ENCODE measurements at regions of chr6 and their contacts with region 1.

Region 1: DNA sequence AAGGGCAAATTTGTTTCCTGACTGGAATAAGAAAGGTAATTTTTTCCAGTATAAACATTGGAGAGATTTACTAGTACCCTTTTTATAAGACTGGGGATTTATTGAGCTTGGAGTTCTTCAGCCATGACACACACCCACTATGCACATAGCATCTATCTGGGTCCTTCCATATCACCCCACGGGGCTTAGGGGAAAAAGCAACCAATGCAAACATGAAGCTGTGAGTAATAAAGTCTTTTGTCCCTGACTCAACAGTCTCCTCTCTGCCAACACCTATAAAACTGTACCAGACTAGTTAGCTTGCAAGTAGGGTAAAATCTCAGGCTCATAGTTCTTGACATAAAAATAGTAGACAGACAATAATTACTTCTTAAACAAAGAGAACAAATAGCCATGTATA is 23.4 kb downstream of the COL21A1 start:
- DNase-seq: no peak
- H3K4me3 ChIP-seq: no peak overlapping the region
- H3K27ac ChIP-seq: peak overlapping the region; percentile 16 to 40
- H3K4me1 ChIP-seq: peaks cover 0 to 46% of the 10 kb centered on the region in 2 donors
- H3K27me3 ChIP-seq: no peaks in the 10 kb centered on the region
- CTCF ChIP-seq: no peak

Region 2: DNA sequence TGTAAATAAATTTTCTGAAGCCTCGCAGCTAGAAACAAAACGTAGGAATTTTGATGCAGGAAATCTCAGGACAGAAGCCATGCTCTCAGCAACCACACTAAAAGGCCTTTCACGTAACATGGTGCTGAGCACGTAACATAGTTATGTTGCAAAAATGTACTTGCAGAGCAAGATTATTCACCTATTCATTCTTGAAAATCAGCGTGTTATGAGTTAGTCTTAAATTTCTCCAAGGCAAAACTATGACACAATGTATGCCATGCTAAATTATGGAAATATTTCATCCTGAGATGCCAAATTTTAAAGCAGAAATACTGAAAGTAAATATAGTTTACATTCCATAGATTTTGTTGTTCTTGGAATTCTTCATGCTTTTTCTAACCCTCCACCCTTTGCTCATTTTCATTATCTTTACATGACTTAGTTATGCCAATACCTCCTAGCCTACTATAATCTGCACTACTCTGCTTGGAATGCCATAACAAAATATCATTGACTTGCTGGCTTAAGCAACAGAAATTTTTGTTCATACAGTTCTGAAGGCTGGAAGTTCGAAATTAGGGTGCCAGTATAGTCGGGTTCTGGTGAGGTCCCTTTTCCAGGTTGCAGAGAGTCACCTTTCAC is 168.8 kb before region 1 on chr6:
- intact Hi-C with region 1: no loop called
- DNase-seq: no peak
- H3K4me3 ChIP-seq: no peak overlapping the region
- H3K27ac ChIP-seq: no peak overlapping the region
- H3K4me1 ChIP-seq: no peaks in the 10 kb centered on the region
- H3K27me3 ChIP-seq: no peaks in the 10 kb centered on the region
- CTCF ChIP-seq: no peak

Region 3: GRCh38 chr6:56131435-56131834 is 92.6 kb before region 1 on chr6:
- intact Hi-C with region 1: loop called (anchors 10 kb)
- DNase-seq: no peak
- H3K4me3 ChIP-seq: no peak overlapping the region
- H3K27ac ChIP-seq: no peak overlapping the region
- H3K4me1 ChIP-seq: peaks cover 0 to 2% of the 10 kb centered on the region in 2 donors
- H3K27me3 ChIP-seq: no peaks in the 10 kb centered on the region
- CTCF ChIP-seq: no peak

Region 4: DNA sequence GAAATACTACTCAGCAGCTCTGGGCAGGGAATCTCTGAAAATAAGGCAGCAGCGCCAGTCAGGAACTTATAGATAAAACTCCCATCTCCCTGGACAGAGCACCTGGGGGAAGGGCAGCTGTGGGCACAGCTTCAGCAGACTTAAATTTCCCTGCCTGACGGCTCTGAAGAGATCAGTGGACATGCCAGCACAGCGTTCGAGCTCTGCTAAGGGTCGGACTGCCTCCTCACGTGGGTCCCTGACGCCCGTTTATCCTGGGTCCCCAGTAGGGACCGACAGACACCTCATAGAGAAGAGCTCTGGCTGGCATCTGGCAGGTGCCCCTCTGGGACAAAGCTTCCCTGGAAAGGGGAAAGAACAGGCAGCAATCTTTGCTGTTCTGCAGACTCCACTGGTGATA is 35.6 kb before region 1 on chr6:
- intact Hi-C with region 1: loop called (anchors 5 kb)
- DNase-seq: no peak
- H3K4me3 ChIP-seq: no peak overlapping the region
- H3K27ac ChIP-seq: peak overlapping the region; percentile 31 to 55
- H3K4me1 ChIP-seq: no peaks in the 10 kb centered on the region
- H3K27me3 ChIP-seq: no peaks in the 10 kb centered on the region
- CTCF ChIP-seq: no peak

Region 5: GRCh38 chr6:56424542-56425083 is 200.6 kb after region 1 on chr6:
- intact Hi-C with region 1: no loop called
- DNase-seq: no peak
- H3K4me3 ChIP-seq: no peak overlapping the region
- H3K27ac ChIP-seq: no peak overlapping the region
- H3K4me1 ChIP-seq: no peaks in the 10 kb centered on the region
- H3K27me3 ChIP-seq: no peaks in the 10 kb centered on the region
- CTCF ChIP-seq: no peak